Activated CD4-positive, alpha-beta T cell treated with anti-CD3 and anti-CD28 coated beads for 36 hours (primary cell): ENCODE measurements at regions of chr1 and their contacts with region 1.

Region 1: DNA sequence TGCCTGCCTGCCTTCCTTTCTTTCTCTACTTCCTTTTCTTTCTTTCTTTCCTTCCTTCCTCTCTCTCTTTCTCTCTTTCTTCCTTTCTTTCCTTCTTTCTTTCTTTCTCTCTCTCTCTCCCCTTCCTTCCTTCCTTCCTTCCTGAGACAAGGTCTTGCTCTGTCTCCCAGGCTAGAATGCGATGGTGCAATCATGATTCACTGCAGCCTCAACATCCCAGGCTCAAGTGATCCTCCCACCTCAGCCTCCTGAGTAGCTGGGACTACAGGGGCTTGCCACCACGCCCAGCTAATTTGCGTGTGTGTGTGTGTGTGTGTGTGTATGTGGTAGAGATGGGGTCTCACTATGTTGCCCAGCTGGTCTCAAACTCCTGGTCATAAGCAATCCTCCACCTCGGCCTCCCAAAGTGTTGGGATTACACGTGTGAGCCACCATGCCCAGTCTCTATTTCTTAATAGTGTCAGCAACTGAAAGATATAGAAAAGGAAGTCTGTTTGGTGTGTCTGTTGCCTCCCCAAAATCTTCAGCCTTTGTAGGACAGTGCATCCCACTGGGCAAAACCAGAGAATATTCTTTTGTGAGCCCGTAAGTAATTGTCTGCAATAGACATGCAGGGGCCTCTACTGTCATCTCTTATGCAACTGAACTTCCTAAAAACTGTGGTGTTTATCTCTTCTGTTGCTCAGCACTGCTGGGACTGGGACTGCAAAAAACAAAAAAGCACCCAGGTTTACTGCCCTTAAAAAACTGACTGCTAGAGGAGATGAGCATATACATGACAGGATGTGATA is 20.9 kb upstream of the RAB4A start:
- DNase-seq: no peak
- ATAC-seq: no peak
- H3K4me3 Mint-ChIP-seq: no peak overlapping the region
- H3K27ac Mint-ChIP-seq: no peak overlapping the region
- H3K4me1 Mint-ChIP-seq: peaks cover 58% of the 10 kb centered on the region
- H3K27me3 Mint-ChIP-seq: no peaks in the 10 kb centered on the region

Region 2: GRCh38 chr1:228727681-228728171 is 522.3 kb before region 1 on chr1:
- CTCF ChIA-PET with region 1: no interaction called
- POLR2A ChIA-PET with region 1: interaction called, 12 read pairs
- intact Hi-C with region 1: no loop called
- DNase-seq: no peak
- ATAC-seq: no peak
- H3K4me3 Mint-ChIP-seq: no peak overlapping the region
- H3K27ac Mint-ChIP-seq: no peak overlapping the region
- H3K4me1 Mint-ChIP-seq: no peaks in the 10 kb centered on the region
- H3K27me3 Mint-ChIP-seq: peaks cover 10% of the 10 kb centered on the region

Region 3: GRCh38 chr1:229186373-229187056 is 63.5 kb before region 1 on chr1:
- CTCF ChIA-PET with region 1: no interaction called
- POLR2A ChIA-PET with region 1: no interaction called
- intact Hi-C with region 1: loop called in 1 of 2 experiments (anchors 1 kb)
- DNase-seq: peak; percentile 55
- ATAC-seq: peak; percentile 98
- H3K4me3 Mint-ChIP-seq: no peak overlapping the region
- H3K27ac Mint-ChIP-seq: peak overlapping the region; percentile 75
- H3K4me1 Mint-ChIP-seq: peaks cover 11% of the 10 kb centered on the region
- H3K27me3 Mint-ChIP-seq: no peaks in the 10 kb centered on the region